AG04449 (cell line): ENCODE measurements at regions of chr9 and their contacts with region 1.

Region 1: GRCh38 chr9:5832543-5833529 is at the start of gene ERMP1:
- DNase-seq: peak; percentile 7
- H3K4me3 ChIP-seq: peak within 1 kb of the TSS; percentile 64
- CTCF ChIP-seq: peak; percentile 85

Region 2: GRCh38 chr9:5793812-5794211 is 39.0 kb before region 1 on chr9:
- CTCF ChIA-PET with region 1: interaction called, 10 read pairs
- POLR2A ChIA-PET with region 1: no interaction called
- DNase-seq: no peak
- H3K4me3 ChIP-seq: no peak overlapping the region
- CTCF ChIP-seq: no peak

Region 3: GRCh38 chr9:5817869-5818268 is 15.0 kb before region 1 on chr9:
- CTCF ChIA-PET with region 1: interaction called, 29 read pairs
- POLR2A ChIA-PET with region 1: no interaction called
- DNase-seq: no peak
- H3K4me3 ChIP-seq: no peak overlapping the region
- CTCF ChIP-seq: no peak

Region 4: GRCh38 chr9:5843794-5844504 is 11.1 kb after region 1 on chr9:
- CTCF ChIA-PET with region 1: interaction called, 61 read pairs
- POLR2A ChIA-PET with region 1: interaction called, 4 read pairs
- DNase-seq: no peak
- H3K4me3 ChIP-seq: no peak overlapping the region
- CTCF ChIP-seq: no peak

Region 5: DNA sequence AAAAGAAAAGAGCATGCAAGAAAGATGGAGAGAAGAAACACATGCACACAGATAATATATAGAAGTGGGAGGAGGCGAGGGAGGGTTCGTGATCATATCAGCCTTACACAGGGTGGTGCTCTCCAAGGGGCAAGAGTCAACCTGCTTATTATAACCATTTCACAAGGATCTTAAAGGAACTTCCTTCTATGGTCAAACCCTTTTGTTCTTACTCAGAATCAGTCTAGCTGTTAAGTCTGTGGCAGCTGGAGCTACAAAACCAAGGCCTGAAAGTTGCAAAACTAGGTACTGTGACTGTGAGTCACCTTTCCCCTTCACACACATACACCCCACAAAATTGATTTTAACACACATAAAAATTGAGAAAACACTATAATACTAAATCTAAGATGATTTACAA is 18.6 kb after region 1 on chr9:
- CTCF ChIA-PET with region 1: interaction called, 61 read pairs
- POLR2A ChIA-PET with region 1: no interaction called
- DNase-seq: no peak
- H3K4me3 ChIP-seq: no peak overlapping the region
- CTCF ChIP-seq: no peak

Region 6: DNA sequence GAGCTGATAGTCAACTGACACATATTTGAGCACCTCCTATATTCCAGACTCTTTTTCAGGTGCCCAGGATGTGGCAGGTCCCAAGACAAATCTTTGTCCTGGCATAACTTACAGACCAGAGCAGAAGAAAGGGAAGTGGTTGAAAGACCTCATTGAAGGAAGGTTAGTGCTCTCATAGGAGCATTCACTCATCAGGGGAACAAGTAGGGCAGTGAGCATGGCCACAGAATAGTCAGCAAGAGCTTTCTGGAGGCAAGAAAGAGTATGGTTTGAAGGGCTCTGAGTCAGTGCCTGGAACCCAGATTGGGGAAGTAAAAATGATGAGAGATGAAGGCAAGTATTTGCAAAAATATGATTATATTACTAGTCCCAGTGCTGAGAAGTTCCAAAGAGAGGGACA is 25.1 kb after region 1 on chr9:
- CTCF ChIA-PET with region 1: interaction called, 49 read pairs
- POLR2A ChIA-PET with region 1: no interaction called
- DNase-seq: no peak
- H3K4me3 ChIP-seq: no peak overlapping the region
- CTCF ChIP-seq: no peak

Region 7: GRCh38 chr9:5863092-5863746 is 30.4 kb after region 1 on chr9:
- CTCF ChIA-PET with region 1: interaction called, 13 read pairs
- POLR2A ChIA-PET with region 1: no interaction called
- DNase-seq: no peak
- H3K4me3 ChIP-seq: no peak overlapping the region
- CTCF ChIP-seq: no peak

Region 8: GRCh38 chr9:5920860-5921328 is 88.1 kb after region 1 on chr9:
- CTCF ChIA-PET with region 1: no interaction called
- POLR2A ChIA-PET with region 1: no interaction called
- DNase-seq: peak; percentile 5
- H3K4me3 ChIP-seq: no peak overlapping the region
- CTCF ChIP-seq: no peak